ENCODE measurements at regions of chr21 and their contacts with region 1.

Region 1: GRCh38 chr21:36989699-36990507 is 16.6 kb upstream of the RIPPLY3 start:
- DNase-seq: peak; percentile 86 to 92
- ATAC-seq: peak; percentile 93 to 95
- H3K4me3 ChIP-seq: peak overlapping the region; percentile 65 to 76 (median 68)
- H3K27ac ChIP-seq: peak overlapping the region; percentile 84 to 94 (median 92)
- H3K4me1 ChIP-seq: peaks cover 0 to 4% of the 10 kb centered on the region in 2 donors
- H3K27me3 ChIP-seq: peaks cover 0 to 5% (median 0%) of the 10 kb centered on the region in 3 donors
- CTCF ChIP-seq: peak; percentile 75 to 98 (median 95)
- POLR2A ChIP-seq: peak in 1 of 2 donors; percentile 24

Region 2: DNA sequence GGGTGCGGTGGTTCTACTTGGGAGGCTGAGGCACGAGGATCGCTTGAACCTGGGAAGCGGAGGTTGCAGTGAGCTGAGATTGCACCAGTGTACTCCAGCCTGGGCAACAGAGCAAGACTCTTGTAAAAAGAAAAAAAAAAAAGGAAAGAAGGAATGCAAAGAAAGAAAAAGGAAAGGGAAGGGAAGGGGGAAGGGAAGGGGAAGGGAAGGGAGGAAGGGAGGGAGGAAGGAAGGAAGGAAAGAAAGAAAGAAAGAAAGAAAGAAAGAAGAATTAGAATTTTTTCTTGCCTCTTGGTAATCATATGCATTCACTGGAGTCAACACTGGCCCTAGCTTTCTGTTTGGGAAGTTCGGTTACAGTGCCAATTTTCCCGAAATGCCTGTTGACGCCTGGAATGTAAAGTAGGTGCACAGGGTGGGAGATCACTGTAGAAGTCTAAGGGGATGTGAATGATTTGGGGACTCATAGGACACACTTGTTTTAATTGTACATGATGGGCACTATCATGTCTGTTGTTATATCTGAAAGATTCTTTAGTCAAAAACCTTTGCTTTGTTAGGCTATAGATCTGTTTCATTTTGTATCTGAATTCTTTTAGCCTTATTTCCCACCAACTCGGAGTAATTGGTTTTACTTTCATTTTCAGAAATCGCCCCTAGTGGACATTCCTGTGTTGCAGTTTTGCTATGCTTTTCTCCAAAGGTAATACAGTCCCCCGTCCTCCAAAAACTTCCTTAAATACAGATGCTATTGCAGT is 729.7 kb before region 1 on chr21:
- in situ Hi-C with region 1: no loop called
- intact Hi-C with region 1: no loop called
- DNase-seq: no peak
- ATAC-seq: peak; percentile 65 to 85
- H3K4me3 ChIP-seq: peak overlapping the region; percentile 47 to 74 (median 55)
- H3K27ac ChIP-seq: peak overlapping the region; percentile 64 to 77 (median 72)
- H3K4me1 ChIP-seq: peaks cover 4 to 8% of the 10 kb centered on the region in 2 donors
- H3K27me3 ChIP-seq: no peaks in the 10 kb centered on the region
- CTCF ChIP-seq: peak in 4 of 5 experiments; percentile 56 to 76 (median 66)
- POLR2A ChIP-seq: no peak

Region 3: DNA sequence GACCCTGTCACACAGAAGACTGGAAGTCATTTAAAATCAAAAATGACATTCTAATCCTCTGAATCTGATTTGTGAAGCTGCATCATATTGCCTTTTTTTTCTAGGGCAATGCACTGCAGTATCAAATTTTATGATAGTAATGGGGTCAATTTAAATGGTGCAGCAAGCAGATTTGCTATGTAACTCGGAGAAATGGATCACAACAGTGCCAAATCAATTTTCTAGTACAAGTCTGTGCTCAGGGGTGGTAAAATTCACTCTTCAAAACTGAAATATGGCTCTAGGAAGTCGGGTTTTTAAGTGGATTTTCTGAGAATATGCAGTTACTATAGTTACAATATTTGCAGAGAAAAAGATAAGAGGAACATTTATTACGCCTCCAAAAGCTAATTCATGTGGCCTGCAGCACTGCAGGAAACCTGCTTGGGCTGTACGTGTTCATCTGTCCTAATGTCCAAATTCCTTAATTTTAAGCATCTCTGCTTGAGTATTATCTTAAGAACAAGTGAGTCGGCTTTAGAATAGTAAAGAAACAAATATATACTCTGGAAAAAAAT is 55.0 kb before region 1 on chr21:
- in situ Hi-C with region 1: no loop called
- intact Hi-C with region 1: loop called (anchors 1 kb)
- DNase-seq: no peak
- ATAC-seq: no peak
- H3K4me3 ChIP-seq: no peak overlapping the region
- H3K27ac ChIP-seq: no peak overlapping the region
- H3K4me1 ChIP-seq: peaks cover 23 to 31% of the 10 kb centered on the region in 2 donors
- H3K27me3 ChIP-seq: no peaks in the 10 kb centered on the region
- CTCF ChIP-seq: no peak
- POLR2A ChIP-seq: no peak

Region 4: DNA sequence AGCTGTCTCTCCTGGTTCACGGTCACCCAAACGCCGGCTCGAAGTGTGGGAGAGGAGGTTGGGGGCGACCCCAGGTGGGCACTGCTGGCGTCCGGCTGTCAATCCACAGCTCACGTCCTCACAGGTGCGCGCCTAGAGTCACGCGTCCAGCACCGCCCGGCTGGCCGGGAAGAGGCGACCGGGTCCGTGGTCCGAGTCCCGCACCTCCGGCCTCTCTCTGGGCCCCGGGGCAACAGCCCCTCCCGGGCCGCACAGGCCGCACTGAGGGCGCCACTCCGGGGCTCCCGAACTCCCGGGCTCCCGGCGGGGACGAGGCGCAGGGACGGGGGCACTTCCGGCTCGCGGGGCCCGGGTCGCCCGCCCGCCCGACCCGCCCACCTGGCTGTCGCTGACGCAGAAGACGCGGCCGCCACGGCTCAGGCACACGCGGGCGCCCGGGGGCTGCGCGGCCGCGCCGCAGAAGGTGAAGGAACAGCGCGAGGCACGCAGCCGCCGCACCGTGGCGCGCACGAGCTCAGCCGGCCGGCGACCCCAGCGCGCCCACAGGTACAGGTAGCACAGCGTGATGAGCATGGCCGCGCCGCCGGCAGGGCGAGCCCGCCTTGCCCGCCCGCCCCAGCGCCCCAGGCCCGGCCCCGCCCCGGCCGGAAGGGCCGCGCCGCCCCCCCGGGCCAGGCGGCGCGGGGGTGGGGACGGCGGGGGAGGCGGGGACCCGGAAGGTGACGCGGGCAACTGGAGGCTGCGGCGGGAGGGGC is 23.7 kb before region 1 on chr21 and contains the start of gene HLCS:
- in situ Hi-C with region 1: no loop called
- intact Hi-C with region 1: loop called (anchors 1 kb)
- DNase-seq: peak; percentile 17 to 60
- ATAC-seq: peak; percentile 70 to 75
- H3K4me3 ChIP-seq: peak within 1 kb of the TSS; percentile 65 to 78 (median 70)
- H3K27ac ChIP-seq: peak within 1 kb of the TSS; percentile 73 to 89 (median 84)
- H3K4me1 ChIP-seq: peaks cover 9 to 23% of the 10 kb centered on the region in 2 donors
- H3K27me3 ChIP-seq: no peaks in the 10 kb centered on the region
- CTCF ChIP-seq: peak in 3 of 5 experiments; percentile 11 to 47 (median 21)
- POLR2A ChIP-seq: peak in 1 of 2 donors; percentile 67
- total RNA-seq, gene HLCS: 10.6 to 18.4 (median 15.4) TPM

Region 5: DNA sequence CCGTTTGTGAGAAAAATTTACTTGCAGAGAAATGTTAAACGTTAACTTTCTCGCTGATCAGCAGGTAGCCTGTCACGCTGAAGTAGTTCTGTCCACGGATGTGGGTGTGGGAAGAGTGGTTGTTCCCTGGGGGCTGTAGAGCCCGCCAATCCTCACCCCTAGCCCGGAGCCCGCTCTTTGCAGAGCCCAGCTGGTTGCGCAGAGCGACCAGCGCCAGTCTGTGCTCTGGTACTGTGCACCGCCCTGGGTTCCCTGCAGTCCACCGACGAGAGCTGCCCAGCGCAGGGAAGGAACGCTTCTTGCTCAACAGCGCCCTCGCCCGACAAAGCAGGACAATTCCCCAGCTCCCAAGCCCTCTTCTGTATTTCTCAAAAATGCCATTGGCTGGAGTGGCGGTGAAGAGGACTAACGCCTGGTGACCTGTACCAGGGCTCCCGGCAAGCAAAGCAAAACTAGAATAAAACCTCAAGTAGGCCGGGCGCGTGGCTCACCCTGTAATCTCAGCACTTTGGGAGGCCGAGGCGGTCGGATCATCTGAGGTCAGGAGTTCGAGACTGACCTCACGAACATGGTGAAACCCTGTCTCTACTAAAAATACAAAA is 19.9 kb after region 1 on chr21:
- in situ Hi-C with region 1: no loop called
- intact Hi-C with region 1: loop called (anchors 1 kb)
- DNase-seq: peak; percentile 62 to 68
- ATAC-seq: peak; percentile 95 to 98
- H3K4me3 ChIP-seq: peak overlapping the region in 3 of 4 donors; percentile 23 to 40 (median 33)
- H3K27ac ChIP-seq: no peak overlapping the region
- H3K4me1 ChIP-seq: peaks cover 3 to 11% of the 10 kb centered on the region in 2 donors
- H3K27me3 ChIP-seq: peaks cover 25 to 34% (median 32%) of the 10 kb centered on the region in 3 donors
- CTCF ChIP-seq: peak; percentile 61 to 84 (median 73)
- POLR2A ChIP-seq: no peak

Region 6: DNA sequence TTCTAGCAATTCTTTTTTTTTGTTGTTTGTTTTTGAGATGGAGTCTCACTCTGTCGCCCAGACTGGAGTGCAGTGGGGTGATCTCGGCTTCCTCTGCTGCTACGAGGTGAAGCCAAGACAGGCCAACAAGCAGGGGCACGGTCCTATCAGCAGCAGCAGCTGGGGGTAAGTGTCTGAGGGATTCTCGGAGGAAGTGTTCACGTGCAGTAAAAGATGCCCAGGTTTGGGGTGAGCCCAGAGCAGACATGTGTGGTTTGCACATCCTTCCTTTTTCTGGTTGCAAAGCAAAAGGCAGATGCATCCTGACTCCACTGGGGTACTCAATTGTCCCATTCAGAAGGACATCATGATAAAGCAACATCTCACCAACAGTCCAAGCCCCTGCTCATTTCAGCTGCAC is 55.2 kb after region 1 on chr21:
- in situ Hi-C with region 1: no loop called
- intact Hi-C with region 1: no loop called
- DNase-seq: no peak
- ATAC-seq: no peak
- H3K4me3 ChIP-seq: no peak overlapping the region
- H3K27ac ChIP-seq: no peak overlapping the region
- H3K4me1 ChIP-seq: no peaks in the 10 kb centered on the region
- H3K27me3 ChIP-seq: no peaks in the 10 kb centered on the region
- CTCF ChIP-seq: no peak
- POLR2A ChIP-seq: no peak

Region 7: GRCh38 chr21:37064841-37065240 is 74.9 kb after region 1 on chr21:
- in situ Hi-C with region 1: no loop called
- intact Hi-C with region 1: loop called (anchors 5 kb)
- DNase-seq: no peak
- ATAC-seq: no peak
- H3K4me3 ChIP-seq: no peak overlapping the region
- H3K27ac ChIP-seq: no peak overlapping the region
- H3K4me1 ChIP-seq: no peaks in the 10 kb centered on the region
- H3K27me3 ChIP-seq: no peaks in the 10 kb centered on the region
- CTCF ChIP-seq: no peak
- POLR2A ChIP-seq: no peak

Region 8: DNA sequence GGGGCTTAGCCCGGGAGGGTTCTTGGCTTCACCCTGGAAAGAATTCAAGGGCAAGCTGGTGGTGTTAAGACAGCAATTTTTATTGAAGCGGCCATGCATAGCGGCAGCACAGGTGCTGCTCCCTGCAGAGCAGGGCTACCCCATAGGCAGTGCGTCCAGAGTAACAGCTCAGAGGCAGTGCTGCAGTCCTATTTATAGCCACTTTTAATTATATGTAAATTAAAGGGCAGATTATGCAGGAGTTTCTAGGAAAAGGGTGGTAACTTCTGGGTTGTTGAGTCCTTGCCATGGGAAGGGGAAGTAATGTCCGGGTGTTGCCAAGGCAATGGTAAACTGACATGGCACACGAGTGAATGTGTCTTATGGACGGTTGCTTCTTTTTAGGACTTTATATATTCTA is 220.2 kb after region 1 on chr21:
- in situ Hi-C with region 1: no loop called
- intact Hi-C with region 1: no loop called
- DNase-seq: no peak
- ATAC-seq: no peak
- H3K4me3 ChIP-seq: no peak overlapping the region
- H3K27ac ChIP-seq: peak overlapping the region in 2 of 4 donors; percentile 87 to 98
- H3K4me1 ChIP-seq: peaks cover 33 to 44% of the 10 kb centered on the region in 2 donors
- H3K27me3 ChIP-seq: no peaks in the 10 kb centered on the region
- CTCF ChIP-seq: no peak
- POLR2A ChIP-seq: no peak